Activated B cell treated with CpG ODN at 0.5 μM for 24 hours (primary cell): ENCODE measurements at regions of chr1 and their contacts with region 1.

Region 1: GRCh38 chr1:15835741-15836510 is 11.6 kb upstream of the SPEN start:
- DNase-seq: peak; percentile 96
- ATAC-seq: peak; percentile 49
- H3K4me3 Mint-ChIP-seq: peak overlapping the region; percentile 90
- H3K27ac Mint-ChIP-seq: peak overlapping the region; percentile 98
- H3K4me1 Mint-ChIP-seq: peaks cover 45% of the 10 kb centered on the region
- H3K27me3 Mint-ChIP-seq: no peaks in the 10 kb centered on the region
- CTCF ChIP-seq: no peak

Region 2: GRCh38 chr1:15825800-15826199 is 10.1 kb before region 1 on chr1:
- CTCF ChIA-PET with region 1: interaction called, 3 read pairs
- POLR2A ChIA-PET with region 1: interaction called, 65 read pairs
- intact Hi-C with region 1: loop called (anchors 1 kb)
- DNase-seq: no peak
- ATAC-seq: no peak
- H3K4me3 Mint-ChIP-seq: no peak overlapping the region
- H3K27ac Mint-ChIP-seq: peak overlapping the region; percentile 54
- H3K4me1 Mint-ChIP-seq: peaks cover 42% of the 10 kb centered on the region
- H3K27me3 Mint-ChIP-seq: no peaks in the 10 kb centered on the region
- CTCF ChIP-seq: no peak

Region 3: GRCh38 chr1:15847100-15847892 is 11.4 kb after region 1 on chr1 and contains the start of gene SPEN:
- CTCF ChIA-PET with region 1: interaction called, 5 read pairs
- POLR2A ChIA-PET with region 1: interaction called, 231 read pairs
- intact Hi-C with region 1: loop called (anchors 1 kb)
- DNase-seq: peak; percentile 99
- ATAC-seq: peak; percentile 74
- H3K4me3 Mint-ChIP-seq: peak within 1 kb of the TSS; percentile 99
- H3K27ac Mint-ChIP-seq: peak within 1 kb of the TSS; percentile 98
- H3K4me1 Mint-ChIP-seq: peaks cover 62% of the 10 kb centered on the region
- H3K27me3 Mint-ChIP-seq: no peaks in the 10 kb centered on the region
- CTCF ChIP-seq: no peak
- total RNA-seq, gene SPEN: 116 and 123 TPM in 2 replicates

Region 4: GRCh38 chr1:15885701-15886610 is 50.0 kb after region 1 on chr1:
- CTCF ChIA-PET with region 1: no interaction called
- POLR2A ChIA-PET with region 1: interaction called, 28 read pairs
- intact Hi-C with region 1: loop called (anchors 1 kb)
- DNase-seq: peak; percentile 49
- ATAC-seq: peak; percentile 23
- H3K4me3 Mint-ChIP-seq: peak overlapping the region; percentile 75
- H3K27ac Mint-ChIP-seq: peak overlapping the region; percentile 87
- H3K4me1 Mint-ChIP-seq: peaks cover 78% of the 10 kb centered on the region
- H3K27me3 Mint-ChIP-seq: no peaks in the 10 kb centered on the region
- CTCF ChIP-seq: no peak

Region 5: GRCh38 chr1:15957228-15958095 is 121.5 kb after region 1 on chr1:
- CTCF ChIA-PET with region 1: no interaction called
- POLR2A ChIA-PET with region 1: interaction called, 10 read pairs
- intact Hi-C with region 1: no loop called
- DNase-seq: no peak
- ATAC-seq: no peak
- H3K4me3 Mint-ChIP-seq: no peak overlapping the region
- H3K27ac Mint-ChIP-seq: peak overlapping the region; percentile 69
- H3K4me1 Mint-ChIP-seq: peaks cover 71% of the 10 kb centered on the region
- H3K27me3 Mint-ChIP-seq: no peaks in the 10 kb centered on the region
- CTCF ChIP-seq: no peak

Region 6: DNA sequence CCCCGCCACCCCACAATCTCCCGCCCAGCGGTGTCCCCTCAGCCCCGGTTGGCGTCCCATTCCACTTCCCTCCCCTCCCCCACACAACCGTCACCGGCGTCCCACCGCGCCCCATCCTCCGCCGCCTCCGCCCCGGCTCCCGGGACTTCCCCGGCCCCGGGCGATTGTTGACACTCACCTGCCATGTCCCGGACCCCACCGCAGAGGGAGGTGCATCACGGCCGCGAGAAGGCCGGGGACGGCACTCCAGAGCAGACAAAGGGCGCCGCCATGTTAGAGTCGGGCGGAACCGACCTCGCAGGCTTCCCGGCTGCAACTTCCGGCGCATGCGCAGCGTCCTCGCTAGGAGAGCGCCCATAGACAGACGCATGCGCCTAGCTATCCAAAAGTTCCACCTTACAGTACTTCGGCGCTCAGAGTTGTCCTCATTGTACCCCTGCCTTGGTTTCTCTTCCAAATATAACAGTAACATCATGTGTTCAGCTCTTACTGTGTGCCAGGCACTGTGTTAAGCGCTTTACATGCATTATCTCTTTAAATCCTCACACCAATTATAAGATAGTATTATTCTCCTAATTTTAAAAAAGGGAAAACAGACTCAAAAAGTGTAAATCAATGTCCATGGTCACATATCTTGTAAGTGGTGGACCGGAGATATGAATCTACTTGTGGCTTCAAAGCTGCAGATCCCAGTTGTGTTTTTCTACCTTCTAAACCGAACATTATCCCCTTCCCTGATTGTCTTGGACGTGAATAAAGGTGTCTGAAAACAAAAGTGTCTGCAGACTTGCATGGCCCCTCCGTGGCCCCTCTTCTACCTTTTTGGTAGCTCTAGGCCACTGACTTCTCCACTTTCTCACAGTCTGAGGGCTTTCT is 140.1 kb after region 1 on chr1 and contains the start of gene ZBTB17:
- CTCF ChIA-PET with region 1: no interaction called
- POLR2A ChIA-PET with region 1: interaction called, 17 read pairs
- intact Hi-C with region 1: no loop called
- DNase-seq: peak; percentile 95
- ATAC-seq: peak; percentile 76
- H3K4me3 Mint-ChIP-seq: peak within 1 kb of the TSS; percentile 93
- H3K27ac Mint-ChIP-seq: peak within 1 kb of the TSS; percentile 96
- H3K4me1 Mint-ChIP-seq: peaks cover 43% of the 10 kb centered on the region
- H3K27me3 Mint-ChIP-seq: no peaks in the 10 kb centered on the region
- CTCF ChIP-seq: no peak
- total RNA-seq, gene ZBTB17: 109 and 121 TPM in 2 replicates

Region 7: DNA sequence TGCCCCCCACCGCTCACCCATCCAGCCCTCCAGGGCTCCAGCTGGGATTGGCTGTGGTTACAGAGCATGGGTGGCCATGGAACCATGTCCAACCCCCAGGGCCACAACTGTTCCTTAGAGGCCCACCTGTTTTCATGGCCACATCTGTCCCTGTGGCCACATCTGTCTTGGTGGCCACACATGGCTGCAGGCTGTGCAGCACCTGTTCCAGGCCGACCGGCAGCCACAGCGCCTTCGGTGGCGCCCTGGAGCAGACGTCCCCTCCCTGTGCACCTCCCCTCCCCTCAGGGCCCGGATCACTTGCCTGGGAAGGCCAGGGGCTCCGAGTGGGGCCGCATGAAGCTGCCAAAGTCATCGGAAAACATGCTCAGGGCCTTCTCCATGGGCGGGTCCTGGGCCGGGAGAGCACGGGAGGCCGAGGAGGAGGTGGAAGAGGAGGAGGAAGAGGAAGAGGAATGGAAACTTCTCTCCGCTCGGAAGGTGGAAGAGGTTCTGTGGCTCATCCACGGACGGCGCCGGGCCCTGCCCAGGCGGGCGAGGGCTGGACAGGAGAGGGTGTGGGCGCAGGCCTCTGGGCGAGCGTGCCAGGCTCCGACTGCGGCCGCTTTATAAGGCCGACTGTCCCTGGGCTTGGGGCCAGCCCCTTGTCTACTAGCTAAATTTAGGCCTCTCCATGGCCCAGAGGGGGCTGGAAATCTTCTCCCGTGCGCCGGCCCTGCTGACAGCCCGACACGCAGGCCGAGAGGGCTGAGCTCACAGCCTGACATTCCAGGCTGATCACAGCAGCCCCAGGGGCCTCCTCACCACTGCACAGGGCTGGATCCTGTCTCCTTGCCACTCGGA is 181.8 kb after region 1 on chr1 and contains the start of gene HSPB7:
- CTCF ChIA-PET with region 1: no interaction called
- POLR2A ChIA-PET with region 1: no interaction called
- intact Hi-C with region 1: no loop called
- DNase-seq: no peak
- ATAC-seq: no peak
- H3K4me3 Mint-ChIP-seq: no peak within 1 kb of the TSS
- H3K27ac Mint-ChIP-seq: no peak within 1 kb of the TSS
- H3K4me1 Mint-ChIP-seq: peaks cover 19% of the 10 kb centered on the region
- H3K27me3 Mint-ChIP-seq: peaks cover 3% of the 10 kb centered on the region
- CTCF ChIP-seq: no peak
- total RNA-seq, gene HSPB7: not detected in 2 replicates